Breast epithelium (tissue), 4 donors: ENCODE measurements at regions of chr10 and their contacts with region 1.

Region 1: DNA sequence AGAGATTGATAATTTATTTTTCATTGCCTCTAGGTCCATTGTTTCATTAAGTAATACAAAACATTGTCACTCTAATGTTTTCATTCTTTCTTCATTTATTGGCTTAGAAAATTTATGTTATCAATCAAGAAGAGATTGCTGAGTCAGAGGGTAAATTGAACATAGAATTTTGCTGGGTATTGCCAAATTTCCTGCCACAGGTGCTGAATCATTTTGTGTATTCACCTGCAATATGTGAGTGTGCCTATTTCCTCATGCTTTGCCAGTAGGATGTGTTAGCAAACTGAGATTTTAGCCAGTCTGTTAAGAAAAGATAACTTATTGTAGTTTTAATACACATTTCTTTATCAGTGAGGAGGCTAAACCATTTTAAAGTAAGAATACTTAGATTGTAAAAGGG is 38.0 kb downstream of the MARCHF5 start:
- DNase-seq: no peak
- H3K4me3 ChIP-seq: no peak overlapping the region
- H3K27ac ChIP-seq: no peak overlapping the region
- H3K4me1 ChIP-seq: no peaks in the 10 kb centered on the region
- H3K27me3 ChIP-seq: no peaks in the 10 kb centered on the region
- CTCF ChIP-seq: no peak
- POLR2A ChIP-seq: no peak

Region 2: DNA sequence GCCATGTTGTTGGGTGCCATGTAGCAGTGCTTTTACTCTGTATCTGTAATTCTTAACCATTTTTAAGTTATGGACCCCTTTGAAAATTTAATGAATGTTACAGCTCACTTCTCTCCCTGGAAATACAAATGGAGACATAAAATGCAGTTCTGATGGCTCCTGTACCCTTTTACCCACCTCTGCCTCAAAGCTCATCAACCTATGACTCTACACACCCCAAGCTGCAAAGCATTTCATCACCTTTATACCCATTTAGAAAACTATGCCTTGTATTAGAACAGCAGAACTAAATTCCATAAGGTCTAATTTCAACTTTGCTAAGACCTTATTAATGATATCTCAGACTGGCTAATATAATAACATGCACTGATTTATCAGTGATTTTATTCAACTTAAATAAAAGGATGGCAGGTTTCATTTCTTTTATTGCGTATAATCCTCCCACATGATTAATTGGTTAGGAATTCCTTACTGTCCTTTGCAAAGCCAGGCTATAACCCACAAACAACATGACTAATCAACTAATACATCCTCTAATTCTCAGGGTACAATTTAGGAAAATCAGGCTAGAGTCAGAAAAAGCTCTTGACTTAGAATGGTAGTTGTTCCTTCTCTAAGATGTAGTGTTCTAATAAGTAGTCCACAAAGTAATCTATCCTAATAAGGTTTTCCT is 106.3 kb before region 1 on chr10:
- intact Hi-C with region 1: no loop called
- DNase-seq: no peak
- H3K4me3 ChIP-seq: no peak overlapping the region
- H3K27ac ChIP-seq: no peak overlapping the region
- H3K4me1 ChIP-seq: no peaks in the 10 kb centered on the region
- H3K27me3 ChIP-seq: no peaks in the 10 kb centered on the region
- CTCF ChIP-seq: no peak
- POLR2A ChIP-seq: no peak

Region 3: GRCh38 chr10:92404612-92405418 is 75.8 kb after region 1 on chr10:
- intact Hi-C with region 1: loop called (anchors 2 kb)
- DNase-seq: no peak
- H3K4me3 ChIP-seq: no peak overlapping the region
- H3K27ac ChIP-seq: no peak overlapping the region
- H3K4me1 ChIP-seq: no peaks in the 10 kb centered on the region
- H3K27me3 ChIP-seq: no peaks in the 10 kb centered on the region
- CTCF ChIP-seq: no peak
- POLR2A ChIP-seq: no peak

Region 4: GRCh38 chr10:92470041-92470440 is 141.0 kb after region 1 on chr10:
- intact Hi-C with region 1: no loop called
- DNase-seq: no peak
- H3K4me3 ChIP-seq: no peak overlapping the region
- H3K27ac ChIP-seq: no peak overlapping the region
- H3K4me1 ChIP-seq: no peaks in the 10 kb centered on the region
- H3K27me3 ChIP-seq: no peaks in the 10 kb centered on the region
- CTCF ChIP-seq: no peak
- POLR2A ChIP-seq: no peak

Region 5: DNA sequence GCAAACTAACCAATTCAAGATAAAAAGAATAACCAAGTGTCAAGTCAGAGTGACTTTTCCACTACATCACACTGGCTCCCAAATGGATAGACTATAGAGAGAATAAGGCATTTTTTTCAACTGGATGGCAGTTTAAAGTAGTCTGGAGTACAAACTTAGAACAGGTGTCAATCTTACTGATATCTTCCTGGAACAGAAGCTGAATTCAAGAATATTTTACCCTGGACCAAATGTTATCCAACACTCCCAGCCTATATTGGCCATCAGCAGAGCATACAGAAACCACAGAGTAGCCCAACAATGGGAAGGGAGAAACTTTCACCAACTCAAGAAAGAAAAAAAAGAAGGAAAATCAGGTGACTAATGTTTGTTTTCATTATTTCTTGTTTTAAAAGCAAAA is 233.4 kb after region 1 on chr10:
- intact Hi-C with region 1: no loop called
- DNase-seq: no peak
- H3K4me3 ChIP-seq: no peak overlapping the region
- H3K27ac ChIP-seq: no peak overlapping the region
- H3K4me1 ChIP-seq: no peaks in the 10 kb centered on the region
- H3K27me3 ChIP-seq: no peaks in the 10 kb centered on the region
- CTCF ChIP-seq: no peak
- POLR2A ChIP-seq: no peak

Region 6: DNA sequence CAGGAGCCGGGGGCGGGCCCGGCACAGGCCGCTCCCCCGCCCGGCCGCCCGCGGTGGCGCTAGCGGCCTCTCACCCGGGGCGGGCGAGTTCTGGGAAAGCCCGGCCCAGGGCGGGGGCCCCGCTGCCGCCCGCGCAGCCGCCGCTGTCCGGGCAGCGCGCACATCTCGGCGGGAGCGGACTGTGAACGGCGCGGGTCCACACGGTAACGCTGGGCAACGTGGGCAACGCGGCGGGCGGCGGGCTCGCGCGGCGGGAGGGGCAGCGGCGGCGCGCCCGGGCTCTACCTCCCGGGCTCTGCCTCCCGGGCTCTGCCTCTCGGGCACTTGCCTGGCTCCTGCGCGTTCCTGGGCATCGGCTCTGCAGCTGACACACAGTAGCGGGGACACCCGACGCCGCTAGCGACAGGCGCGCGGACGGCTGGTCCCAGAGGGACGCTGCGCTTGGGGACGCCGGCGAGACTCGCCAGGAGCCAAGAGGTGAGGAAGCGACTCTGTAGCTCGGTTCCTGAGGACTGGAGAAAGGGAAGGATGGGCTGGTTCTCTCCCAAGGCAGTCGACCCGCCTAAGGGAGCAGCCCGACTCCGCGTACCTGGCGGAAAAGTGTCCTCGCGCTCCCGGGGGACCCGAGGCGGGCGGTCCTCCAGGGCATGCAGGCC is 1664.9 kb after region 1 on chr10 and contains the start of gene PLCE1:
- intact Hi-C with region 1: no loop called
- DNase-seq: no peak
- H3K4me3 ChIP-seq: peak within 1 kb of the TSS; percentile 63 to 80 (median 80)
- H3K27ac ChIP-seq: peak within 1 kb of the TSS; percentile 67 to 71
- H3K4me1 ChIP-seq: peaks cover 0 to 8% of the 10 kb centered on the region in 2 donors
- H3K27me3 ChIP-seq: no peaks in the 10 kb centered on the region
- CTCF ChIP-seq: no peak
- POLR2A ChIP-seq: no peak
- total RNA-seq, gene PLCE1: 6.2 to 14.1 (median 7.0) TPM